Naive thymus-derived CD4-positive, alpha-beta T cell (primary cell): ENCODE measurements at regions of chr12 and their contacts with region 1.

Region 1: DNA sequence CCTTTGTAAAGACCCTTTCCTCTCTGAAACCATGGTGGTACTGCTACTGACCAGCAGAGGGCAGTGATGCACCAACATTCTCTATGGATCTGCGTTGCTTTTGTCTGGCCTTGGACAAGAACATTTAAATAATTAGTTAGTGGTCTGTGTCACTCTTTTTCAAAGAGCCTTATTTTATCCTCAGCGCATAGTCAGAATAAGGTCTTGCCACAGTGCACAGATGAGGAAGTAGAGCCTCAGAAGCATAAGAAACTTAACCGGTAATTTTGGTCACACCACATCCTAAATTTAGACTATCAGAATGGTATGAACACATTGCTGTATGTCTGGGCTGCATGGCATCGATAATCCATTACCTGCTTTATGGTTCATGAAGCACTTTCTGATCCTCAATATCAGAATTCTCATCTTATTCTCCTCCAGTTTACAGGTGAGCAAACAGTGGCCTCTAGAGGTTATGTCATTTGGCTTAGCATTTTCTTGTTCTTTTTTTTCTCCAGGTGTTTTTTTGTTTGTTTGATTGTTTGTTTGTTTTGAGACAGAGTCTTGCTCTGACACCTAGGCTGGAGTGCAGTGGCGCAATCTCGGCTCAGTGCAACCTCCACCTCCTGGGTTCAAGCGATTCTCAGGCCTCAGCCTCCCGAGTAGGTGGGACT is 23.7 kb upstream of the IFT81 start:
- DNase-seq: peak in 8 of 9 donors; percentile 33 to 60 (median 55)
- ATAC-seq: peak; percentile 92
- H3K4me3 ChIP-seq: no peak overlapping the region
- H3K4me3 Mint-ChIP-seq: peak overlapping the region in 2 of 10 donors; percentile 12 to 44
- H3K27ac ChIP-seq: no peak overlapping the region
- H3K27ac Mint-ChIP-seq: peak overlapping the region in 4 of 9 donors; percentile 3 to 69 (median 42)
- H3K4me1 ChIP-seq: peaks cover 3 to 4% of the 10 kb centered on the region in 2 donors
- H3K4me1 Mint-ChIP-seq: peaks cover 0 to 13% (median 8%) of the 10 kb centered on the region in 7 donors
- H3K27me3 ChIP-seq: no peaks in the 10 kb centered on the region
- H3K27me3 Mint-ChIP-seq: no peaks in the 10 kb centered on the region

Region 2: GRCh38 chr12:110079477-110080400 is 20.7 kb before region 1 on chr12:
- CTCF ChIA-PET with region 1: no interaction called
- POLR2A ChIA-PET with region 1: no interaction called
- intact Hi-C with region 1: loop called in 1 of 2 experiments (anchors 1 kb)
- DNase-seq: peak; percentile 44 to 83 (median 75)
- ATAC-seq: peak; percentile 96
- H3K4me3 ChIP-seq: peak overlapping the region; percentile 42
- H3K4me3 Mint-ChIP-seq: peak overlapping the region; percentile 76 to 94 (median 86)
- H3K27ac ChIP-seq: peak overlapping the region; percentile 71
- H3K27ac Mint-ChIP-seq: peak overlapping the region; percentile 92 to 99 (median 98)
- H3K4me1 ChIP-seq: peaks cover 9 to 21% of the 10 kb centered on the region in 2 donors
- H3K4me1 Mint-ChIP-seq: peaks cover 13 to 47% (median 26%) of the 10 kb centered on the region in 7 donors
- H3K27me3 ChIP-seq: no peaks in the 10 kb centered on the region
- H3K27me3 Mint-ChIP-seq: peaks cover 0 to 5% (median 0%) of the 10 kb centered on the region in 5 donors

Region 3: DNA sequence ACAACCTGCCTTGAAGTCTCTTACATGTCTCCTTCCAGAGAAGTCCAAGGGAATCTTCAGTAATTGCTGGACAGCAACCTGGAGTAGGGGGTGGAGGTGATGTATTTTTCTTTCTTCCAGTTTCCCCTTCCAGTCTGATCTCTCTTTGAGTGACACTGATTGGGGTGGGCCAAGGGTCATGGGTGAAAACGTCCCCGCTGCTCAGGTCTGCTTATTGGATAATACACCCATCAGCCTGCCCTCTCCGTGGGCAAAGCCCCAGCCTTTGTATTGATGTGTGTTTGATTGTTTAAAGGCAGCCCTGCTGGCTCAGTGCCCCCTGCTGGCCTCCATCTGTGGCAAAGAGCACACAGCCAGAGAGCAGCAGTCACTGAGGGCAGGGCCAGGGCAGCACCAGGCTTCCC is 144.9 kb after region 1 on chr12:
- CTCF ChIA-PET with region 1: interaction called, 7 read pairs
- POLR2A ChIA-PET with region 1: no interaction called
- intact Hi-C with region 1: loop called in 1 of 2 experiments (anchors 1 kb)
- DNase-seq: peak in 7 of 9 donors; percentile 7 to 46 (median 30)
- ATAC-seq: peak; percentile 85
- H3K4me3 ChIP-seq: no peak overlapping the region
- H3K4me3 Mint-ChIP-seq: no peak overlapping the region
- H3K27ac ChIP-seq: no peak overlapping the region
- H3K27ac Mint-ChIP-seq: no peak overlapping the region
- H3K4me1 ChIP-seq: no peaks in the 10 kb centered on the region
- H3K4me1 Mint-ChIP-seq: peaks cover 0 to 5% (median 0%) of the 10 kb centered on the region in 7 donors
- H3K27me3 ChIP-seq: no peaks in the 10 kb centered on the region
- H3K27me3 Mint-ChIP-seq: peaks cover 0 to 5% (median 5%) of the 10 kb centered on the region in 5 donors

Region 4: DNA sequence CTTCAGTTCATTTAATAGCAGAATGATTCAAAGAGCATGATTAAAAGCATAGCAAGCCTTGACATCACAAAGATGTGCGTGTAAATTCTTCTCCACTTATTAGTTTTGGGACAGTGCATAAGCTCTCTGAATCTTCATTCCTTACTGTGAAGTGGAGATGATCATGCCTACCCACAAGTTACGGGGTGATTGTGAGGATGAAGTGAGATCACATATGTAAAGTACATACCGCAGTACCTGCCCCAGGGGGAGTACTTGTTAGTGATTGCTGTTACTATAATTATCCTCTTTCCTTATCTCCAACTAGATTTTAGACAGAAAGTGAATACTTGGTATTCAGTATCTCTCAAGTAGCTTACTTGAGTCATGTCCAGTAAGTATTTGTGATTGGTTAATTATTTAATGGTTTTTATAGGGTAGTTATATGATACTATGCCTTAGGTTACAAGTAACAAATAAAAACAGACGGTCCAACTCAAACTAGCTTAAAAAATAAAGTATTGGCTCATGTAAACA is 407.7 kb after region 1 on chr12:
- CTCF ChIA-PET with region 1: no interaction called
- POLR2A ChIA-PET with region 1: no interaction called
- intact Hi-C with region 1: loop called in 1 of 2 experiments (anchors 1 kb)
- DNase-seq: no peak
- ATAC-seq: no peak
- H3K4me3 ChIP-seq: no peak overlapping the region
- H3K4me3 Mint-ChIP-seq: no peak overlapping the region
- H3K27ac ChIP-seq: no peak overlapping the region
- H3K27ac Mint-ChIP-seq: no peak overlapping the region
- H3K4me1 ChIP-seq: no peaks in the 10 kb centered on the region
- H3K4me1 Mint-ChIP-seq: peaks cover 0 to 3% (median 0%) of the 10 kb centered on the region in 7 donors
- H3K27me3 ChIP-seq: no peaks in the 10 kb centered on the region
- H3K27me3 Mint-ChIP-seq: peaks cover 0 to 5% (median 0%) of the 10 kb centered on the region in 5 donors

Region 5: DNA sequence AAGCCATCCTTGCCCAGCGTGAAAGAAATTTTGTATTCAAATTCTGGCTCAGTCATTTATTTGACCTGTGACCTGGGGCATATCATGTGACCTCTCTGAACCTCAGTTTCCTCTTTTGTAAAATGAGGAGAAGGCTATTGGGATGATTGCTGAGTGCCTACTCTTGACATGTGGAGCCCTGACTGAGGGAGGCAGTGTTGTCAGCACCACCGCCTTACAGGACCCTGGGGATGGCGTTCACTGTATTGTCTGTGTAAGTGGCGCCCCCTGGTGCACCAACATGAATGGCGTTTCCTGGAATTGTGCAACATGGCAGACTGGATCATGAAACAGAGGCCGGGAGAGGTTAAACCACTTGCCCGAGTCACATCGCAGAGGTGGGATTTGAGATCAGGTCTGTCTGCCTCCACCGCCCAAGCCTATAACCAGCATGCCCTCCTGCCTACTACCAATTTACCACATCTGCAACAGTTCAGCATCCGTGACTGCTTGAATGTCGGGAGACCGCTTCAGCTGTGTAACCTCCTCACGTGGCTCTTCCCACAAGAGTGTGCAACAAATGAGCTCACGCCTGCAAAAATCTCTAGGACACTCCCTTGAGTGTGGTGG is 726.3 kb after region 1 on chr12:
- CTCF ChIA-PET with region 1: interaction called, 3 read pairs
- POLR2A ChIA-PET with region 1: no interaction called
- intact Hi-C with region 1: loop called in 1 of 2 experiments (anchors 2 kb)
- DNase-seq: peak; percentile 61 to 85 (median 77)
- ATAC-seq: peak; percentile 98
- H3K4me3 ChIP-seq: no peak overlapping the region
- H3K4me3 Mint-ChIP-seq: peak overlapping the region in 9 of 10 donors; percentile 35 to 75 (median 58)
- H3K27ac ChIP-seq: no peak overlapping the region
- H3K27ac Mint-ChIP-seq: peak overlapping the region in 8 of 9 donors; percentile 4 to 81 (median 20)
- H3K4me1 ChIP-seq: no peaks in the 10 kb centered on the region
- H3K4me1 Mint-ChIP-seq: peaks cover 0 to 10% (median 6%) of the 10 kb centered on the region in 7 donors
- H3K27me3 ChIP-seq: no peaks in the 10 kb centered on the region
- H3K27me3 Mint-ChIP-seq: peaks cover 0 to 4% (median 0%) of the 10 kb centered on the region in 5 donors

Region 6: DNA sequence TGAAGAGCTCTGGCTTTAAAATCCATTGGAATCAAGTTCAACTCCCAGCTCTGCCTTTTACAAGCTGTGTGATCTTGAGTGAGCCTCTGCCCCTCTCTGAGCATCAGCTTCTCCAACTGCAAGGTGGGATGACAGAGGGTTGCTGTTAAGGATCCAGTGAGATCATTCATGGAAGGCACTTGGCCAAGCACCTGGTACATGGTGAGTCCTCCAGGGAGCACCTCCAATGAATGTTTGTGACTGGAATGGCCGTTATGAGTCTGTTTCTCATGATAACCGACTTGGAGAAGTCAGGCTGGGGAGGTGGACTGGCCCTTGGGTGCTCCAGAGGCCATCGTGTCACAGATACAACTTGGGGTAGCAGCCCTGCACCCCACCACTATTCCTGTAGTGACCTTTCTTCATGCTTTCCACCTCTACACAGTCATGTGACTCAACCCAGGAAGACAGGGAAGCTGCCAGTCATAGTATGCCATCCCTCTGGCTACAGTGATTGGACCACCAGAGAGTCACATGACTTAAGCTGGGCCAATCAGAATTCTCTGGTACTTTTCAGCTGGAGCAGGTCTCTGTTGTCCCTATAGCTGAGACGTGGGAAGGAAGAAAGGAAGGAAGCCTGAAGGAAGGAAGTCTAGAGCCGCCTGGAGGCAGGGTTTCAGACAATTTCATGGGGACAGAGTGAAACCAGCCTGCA is 966.4 kb after region 1 on chr12:
- CTCF ChIA-PET with region 1: no interaction called
- POLR2A ChIA-PET with region 1: no interaction called
- intact Hi-C with region 1: no loop called
- DNase-seq: no peak
- ATAC-seq: no peak
- H3K4me3 ChIP-seq: no peak overlapping the region
- H3K4me3 Mint-ChIP-seq: peak overlapping the region in 1 of 10 donors; percentile 17
- H3K27ac ChIP-seq: no peak overlapping the region
- H3K27ac Mint-ChIP-seq: peak overlapping the region in 4 of 9 donors; percentile 45 to 91 (median 52)
- H3K4me1 ChIP-seq: peaks cover 0 to 16% of the 10 kb centered on the region in 2 donors
- H3K4me1 Mint-ChIP-seq: peaks cover 11 to 31% (median 23%) of the 10 kb centered on the region in 7 donors
- H3K27me3 ChIP-seq: no peaks in the 10 kb centered on the region
- H3K27me3 Mint-ChIP-seq: peaks cover 0 to 15% (median 0%) of the 10 kb centered on the region in 5 donors